RWPE1 (cell line): ENCODE measurements at regions of chr2 and their contacts with region 1.

Region 1: DNA sequence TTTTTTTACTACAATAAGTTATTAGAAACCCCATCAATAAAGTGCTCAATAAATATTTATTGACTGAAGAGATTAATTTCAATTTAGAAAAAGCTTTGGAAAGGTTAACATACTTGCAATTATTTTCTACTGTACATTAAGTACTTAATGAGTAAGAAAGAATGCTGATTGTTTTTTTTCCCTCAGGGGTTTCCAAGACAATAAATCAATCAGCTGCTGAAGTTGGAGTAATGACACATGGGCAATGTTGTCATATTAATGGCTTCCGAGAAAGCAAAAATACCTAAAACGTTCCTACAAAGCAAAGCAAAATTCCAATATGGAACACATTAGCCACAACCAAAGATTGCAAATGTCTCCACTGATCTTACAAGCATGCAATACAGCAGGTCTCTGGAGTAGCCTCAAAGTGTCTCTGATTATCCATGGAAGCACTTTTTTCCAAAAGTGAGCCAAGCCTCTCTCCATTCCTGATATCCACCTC is 66.7 kb downstream of the ZC3H6 start:
- DNase-seq: peak; percentile 43
- H3K27ac ChIP-seq: no peak overlapping the region
- CTCF ChIP-seq: no peak

Region 2: DNA sequence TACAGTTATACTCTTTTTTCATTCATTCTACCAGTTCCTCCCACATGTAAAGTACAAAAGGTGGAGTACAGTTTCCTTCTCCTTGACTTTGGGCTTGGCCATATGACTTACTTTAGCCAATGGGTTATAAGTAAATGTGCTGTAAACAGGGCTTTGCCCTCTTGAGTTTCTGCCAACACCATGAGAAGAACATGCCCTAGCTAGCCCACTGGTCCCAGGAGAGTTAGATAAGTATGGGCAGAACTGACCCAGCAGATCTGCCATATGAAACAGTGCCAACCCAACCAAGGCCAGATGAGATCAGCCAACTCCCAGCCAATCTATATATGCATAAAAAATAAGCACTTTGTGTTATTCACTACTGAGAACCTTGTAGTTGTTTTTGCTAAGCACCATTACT is 112.8 kb before region 1 on chr2:
- CTCF ChIA-PET with region 1: interaction called, 11 read pairs
- POLR2A ChIA-PET with region 1: no interaction called
- DNase-seq: peak; percentile 88
- H3K27ac ChIP-seq: no peak overlapping the region
- CTCF ChIP-seq: no peak